PC-3 (cell line): ENCODE measurements at regions of chr15 and their contacts with region 1.

Region 1: DNA sequence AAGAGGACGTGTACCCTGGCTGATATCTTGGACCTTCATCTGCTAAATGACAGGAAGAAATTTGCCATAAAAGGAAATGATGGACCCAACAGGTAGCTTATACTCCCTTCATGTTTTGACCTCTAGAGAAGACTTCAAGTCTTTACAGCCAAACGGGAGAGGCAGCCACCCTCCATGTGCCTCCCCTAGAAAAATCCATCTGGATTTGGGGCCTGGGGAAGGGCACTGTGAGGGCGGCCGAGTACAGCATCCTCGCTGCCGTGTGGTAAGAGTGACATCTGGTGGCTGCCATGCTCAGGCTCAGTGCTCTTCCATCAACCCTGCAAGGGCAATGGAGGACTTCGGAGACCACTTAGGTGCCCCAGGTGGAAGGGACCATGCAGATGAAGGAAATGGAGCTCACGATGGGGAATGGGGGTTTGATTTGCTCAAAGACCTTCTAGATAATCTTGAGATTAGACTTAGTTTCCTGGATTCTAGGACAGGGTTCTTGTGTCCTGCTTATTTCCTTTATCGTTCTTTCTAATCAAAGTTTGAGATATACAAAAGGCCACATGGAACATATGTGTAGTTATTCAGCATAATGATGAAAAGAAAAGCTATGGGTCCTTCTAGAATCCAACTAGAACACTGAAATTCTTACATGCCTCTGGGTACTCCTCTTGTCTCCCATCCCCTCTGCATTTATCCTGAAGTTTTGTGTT is 44.4 kb downstream of the AQP9 start:
- DNase-seq: peak; percentile 58
- ATAC-seq: peak; percentile 86
- H3K4me3 ChIP-seq: no peak overlapping the region
- H3K27ac ChIP-seq: no peak overlapping the region
- H3K4me1 ChIP-seq: peaks cover 18% of the 10 kb centered on the region
- H3K27me3 ChIP-seq: no peaks in the 10 kb centered on the region
- CTCF ChIP-seq: peak; percentile 84

Region 2: DNA sequence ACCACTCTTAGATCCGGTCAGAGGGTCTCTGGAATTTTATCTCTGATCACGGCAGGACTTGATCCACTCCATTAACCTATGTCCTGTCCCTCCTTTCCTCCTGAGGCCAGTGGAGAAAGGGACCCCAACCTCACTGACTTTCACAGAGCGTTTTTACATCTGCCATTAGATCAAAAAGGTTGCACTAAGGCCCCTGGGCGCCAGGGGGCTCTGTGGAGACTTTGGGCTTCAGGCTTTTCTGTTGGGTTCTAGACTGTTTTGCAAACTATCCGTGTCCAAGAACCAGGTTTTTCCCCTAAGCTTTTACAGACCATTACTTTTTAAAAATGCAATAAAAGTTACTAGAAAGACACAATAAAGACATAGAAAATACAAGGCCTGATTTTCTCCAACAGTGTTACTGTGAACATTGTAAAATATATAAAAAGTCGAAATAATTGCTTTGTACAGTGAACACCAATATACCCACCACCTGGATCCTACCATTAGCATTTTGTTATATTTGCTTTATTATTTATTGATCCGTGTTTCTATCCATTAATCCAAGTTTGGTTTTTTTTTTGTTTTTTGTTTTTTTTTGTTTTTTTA is 316.4 kb before region 1 on chr15:
- CTCF ChIA-PET with region 1: no interaction called
- POLR2A ChIA-PET with region 1: no interaction called
- intact Hi-C with region 1: loop called (anchors 10 kb)
- DNase-seq: peak; percentile 69
- ATAC-seq: no peak; the same call in 1 of the 2 replicates
- H3K4me3 ChIP-seq: no peak overlapping the region
- H3K27ac ChIP-seq: no peak overlapping the region
- H3K4me1 ChIP-seq: no peaks in the 10 kb centered on the region
- H3K27me3 ChIP-seq: no peaks in the 10 kb centered on the region
- CTCF ChIP-seq: peak; percentile 80

Region 3: DNA sequence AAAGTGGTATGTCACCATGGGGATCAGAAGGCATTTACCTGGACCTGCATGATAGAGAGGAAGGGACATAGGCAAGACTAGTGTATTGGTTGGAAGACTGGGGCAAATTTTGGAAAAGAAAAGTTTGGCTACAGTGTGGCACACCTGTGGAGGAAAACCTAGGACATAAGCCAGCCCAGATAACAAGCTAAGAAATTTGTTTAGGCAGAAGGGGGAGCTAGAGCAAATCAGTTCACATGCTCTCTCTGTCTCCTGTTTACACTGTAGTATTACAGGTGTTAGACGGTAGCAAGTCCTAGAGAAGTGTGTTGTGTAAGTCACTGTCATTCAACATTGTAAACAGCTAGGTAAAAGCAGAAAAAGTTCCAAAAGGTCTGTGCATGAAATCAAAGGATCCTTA is 105.2 kb before region 1 on chr15:
- CTCF ChIA-PET with region 1: interaction called, 4 read pairs
- POLR2A ChIA-PET with region 1: no interaction called
- intact Hi-C with region 1: loop called (anchors 1 kb)
- DNase-seq: peak; percentile 40
- ATAC-seq: peak; percentile 82
- H3K4me3 ChIP-seq: no peak overlapping the region
- H3K27ac ChIP-seq: no peak overlapping the region
- H3K4me1 ChIP-seq: no peaks in the 10 kb centered on the region
- H3K27me3 ChIP-seq: peaks cover 21% of the 10 kb centered on the region; the same call in 1 of the 2 replicates
- CTCF ChIP-seq: peak; percentile 57

Region 4: DNA sequence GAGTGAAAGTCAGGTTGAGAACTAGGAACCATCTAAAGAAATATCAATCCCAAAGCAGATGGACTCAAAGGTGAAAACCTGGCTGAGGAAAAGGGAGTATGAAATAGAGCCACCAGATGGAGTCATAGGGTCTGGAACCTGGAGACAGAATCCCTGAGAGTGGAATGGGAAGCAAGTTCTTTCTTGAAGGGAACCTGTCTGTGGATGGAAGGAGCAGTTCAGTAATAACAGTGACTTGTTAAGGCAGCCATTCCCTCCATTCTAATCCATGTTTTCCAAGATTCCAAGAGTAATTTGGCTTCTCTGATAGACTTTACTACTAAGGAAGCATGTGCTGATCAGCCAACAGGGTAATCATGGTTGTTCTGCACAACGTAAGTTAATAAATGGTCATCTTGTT is 66.9 kb before region 1 on chr15:
- CTCF ChIA-PET with region 1: no interaction called
- POLR2A ChIA-PET with region 1: no interaction called
- intact Hi-C with region 1: loop called (anchors 1 kb)
- DNase-seq: peak; percentile 43
- ATAC-seq: 0 out of 2 replicates have a peak, but pooled peaks have one; percentile 38
- H3K4me3 ChIP-seq: no peak overlapping the region
- H3K27ac ChIP-seq: no peak overlapping the region
- H3K4me1 ChIP-seq: no peaks in the 10 kb centered on the region
- H3K27me3 ChIP-seq: peaks cover 4% of the 10 kb centered on the region; the same call in 1 of the 2 replicates
- CTCF ChIP-seq: peak; percentile 61